H1 (cell line): ENCODE measurements at regions of chr12 and their contacts with region 1.

Region 1: GRCh38 chr12:62123721-62124203 is 136.4 kb upstream of the USP15 start:
- DNase-seq: peak in 1 of 2 experiments; percentile 56
- H3K4me3 ChIP-seq: no peak overlapping the region
- H3K27ac ChIP-seq: no peak overlapping the region
- H3K4me1 ChIP-seq: no peaks in the 10 kb centered on the region
- H3K27me3 ChIP-seq: no peaks in the 10 kb centered on the region
- CTCF ChIP-seq: peak in 2 of 3 experiments; percentile 72 to 80; a peak in 3 of 4 replicates
- EP300 ChIP-seq: no peak
- POLR2A ChIP-seq: no peak
- RAD21 ChIP-seq: peak; percentile 88 to 90

Region 2: GRCh38 chr12:62078020-62078419 is 45.7 kb before region 1 on chr12:
- CTCF ChIA-PET with region 1: interaction called, 16 read pairs
- POLR2A ChIA-PET with region 1: no interaction called
- DNase-seq: no peak
- H3K4me3 ChIP-seq: no peak overlapping the region
- H3K27ac ChIP-seq: no peak overlapping the region; the same call in 1 of the 2 replicates
- H3K4me1 ChIP-seq: peaks cover 0 to 7% (median 2%) of the 10 kb centered on the region in 4 experiments; a peak in 3 of 7 replicates
- H3K27me3 ChIP-seq: no peaks in the 10 kb centered on the region
- CTCF ChIP-seq: no peak
- EP300 ChIP-seq: no peak
- POLR2A ChIP-seq: no peak
- RAD21 ChIP-seq: no peak

Region 3: GRCh38 chr12:62098132-62098531 is 25.6 kb before region 1 on chr12:
- CTCF ChIA-PET with region 1: interaction called, 10 read pairs
- POLR2A ChIA-PET with region 1: no interaction called
- DNase-seq: no peak
- H3K4me3 ChIP-seq: no peak overlapping the region
- H3K27ac ChIP-seq: no peak overlapping the region
- H3K4me1 ChIP-seq: no peaks in the 10 kb centered on the region
- H3K27me3 ChIP-seq: no peaks in the 10 kb centered on the region
- CTCF ChIP-seq: no peak
- EP300 ChIP-seq: no peak
- POLR2A ChIP-seq: no peak
- RAD21 ChIP-seq: no peak

Region 4: DNA sequence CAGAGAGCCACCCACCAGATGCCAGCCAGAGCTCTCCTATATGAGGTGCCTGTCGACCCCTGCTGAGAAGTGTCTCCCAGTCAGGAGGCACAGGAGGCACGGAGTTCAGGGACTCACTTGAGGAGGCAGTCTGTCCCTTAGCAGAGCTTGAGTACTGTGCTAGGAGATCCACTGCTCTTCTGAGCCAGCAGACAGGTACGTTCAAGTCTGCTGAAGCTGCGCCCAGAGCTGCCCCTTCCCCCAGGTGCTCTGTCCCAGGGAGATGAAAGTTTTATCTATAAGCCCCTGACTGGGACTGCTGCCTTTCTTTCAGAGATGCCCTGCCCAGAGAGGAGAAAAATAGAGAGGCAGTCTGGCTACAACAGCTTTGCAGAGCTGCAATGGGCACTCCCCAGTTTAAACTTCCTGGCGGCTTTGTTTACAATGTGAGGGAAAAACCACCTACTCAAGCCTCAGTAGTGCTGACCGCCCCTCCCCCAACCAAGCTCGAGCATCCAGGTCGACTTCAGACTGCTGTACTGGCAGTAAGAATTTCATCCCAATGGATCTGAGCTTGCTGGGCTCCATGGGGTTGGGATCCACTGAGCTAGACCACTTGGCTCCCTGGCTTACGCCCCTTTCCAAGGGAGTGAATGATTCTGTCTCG is 10.3 kb before region 1 on chr12:
- CTCF ChIA-PET with region 1: interaction called, 10 read pairs
- POLR2A ChIA-PET with region 1: no interaction called
- DNase-seq: peak in 1 of 2 experiments; percentile 60
- H3K4me3 ChIP-seq: 0 out of 8 replicates have a peak overlapping the region, but pooled peaks of 1 of the 4 experiments have one; percentile 21
- H3K27ac ChIP-seq: no peak overlapping the region
- H3K4me1 ChIP-seq: peaks cover 2 to 6% (median 3%) of the 10 kb centered on the region in 4 experiments; a peak in 5 of 7 replicates
- H3K27me3 ChIP-seq: no peaks in the 10 kb centered on the region
- CTCF ChIP-seq: no peak
- EP300 ChIP-seq: no peak
- POLR2A ChIP-seq: no peak
- RAD21 ChIP-seq: no peak

Region 5: GRCh38 chr12:62135553-62136200 is 11.9 kb after region 1 on chr12:
- CTCF ChIA-PET with region 1: interaction called, 23 read pairs
- POLR2A ChIA-PET with region 1: no interaction called
- DNase-seq: no peak
- H3K4me3 ChIP-seq: no peak overlapping the region
- H3K27ac ChIP-seq: no peak overlapping the region
- H3K4me1 ChIP-seq: no peaks in the 10 kb centered on the region
- H3K27me3 ChIP-seq: no peaks in the 10 kb centered on the region
- CTCF ChIP-seq: no peak
- EP300 ChIP-seq: no peak
- POLR2A ChIP-seq: no peak
- RAD21 ChIP-seq: no peak

Region 6: DNA sequence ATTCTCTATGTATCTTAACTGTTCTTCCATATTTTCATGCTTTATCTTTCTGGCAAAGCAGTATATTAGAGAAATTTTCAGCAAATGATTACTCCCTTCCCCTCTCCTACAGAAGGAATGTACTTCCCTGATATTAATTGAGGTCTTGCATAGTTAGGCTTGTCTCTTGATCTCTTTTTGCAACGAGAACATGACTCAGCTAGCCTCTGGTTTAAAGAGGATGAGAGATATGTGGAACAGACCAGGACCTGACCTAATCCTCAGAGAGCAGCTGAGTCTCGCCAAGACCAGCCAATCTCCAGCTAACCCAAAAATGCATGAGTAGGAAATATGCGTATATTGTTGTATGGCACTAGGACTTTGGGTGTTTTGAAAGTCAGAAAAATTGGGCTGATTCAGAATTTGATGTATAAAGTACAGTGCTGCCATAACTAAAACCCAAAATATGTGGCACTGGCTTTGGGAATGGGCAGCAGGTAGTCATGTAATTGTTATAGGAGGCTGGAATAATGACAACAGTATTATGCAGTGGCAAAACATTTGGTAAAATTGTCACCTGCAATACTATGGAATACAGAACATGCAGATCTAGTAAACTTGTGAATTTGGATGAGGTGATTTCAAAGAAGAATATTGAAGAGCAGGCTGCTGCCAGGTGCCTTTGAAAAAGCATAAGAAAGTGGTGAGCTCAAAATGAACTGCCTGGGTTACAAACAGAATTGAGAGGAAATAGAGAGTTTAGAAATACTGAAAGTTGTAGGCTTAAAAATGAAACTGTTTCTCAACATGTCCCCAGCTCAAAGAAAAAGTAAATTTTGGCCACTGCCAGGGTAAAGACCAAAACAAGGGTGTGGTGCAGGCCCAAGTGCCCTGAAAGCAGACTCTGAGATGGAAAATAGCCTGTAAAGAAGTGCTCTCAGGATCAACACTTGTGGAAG is 127.2 kb after region 1 on chr12:
- CTCF ChIA-PET with region 1: no interaction called
- POLR2A ChIA-PET with region 1: no interaction called
- DNase-seq: no peak
- H3K4me3 ChIP-seq: no peak overlapping the region
- H3K27ac ChIP-seq: no peak overlapping the region
- H3K4me1 ChIP-seq: peaks cover 0 to 4% (median 1%) of the 10 kb centered on the region in 4 experiments; a peak in 1 of 7 replicates
- H3K27me3 ChIP-seq: no peaks in the 10 kb centered on the region
- CTCF ChIP-seq: no peak
- EP300 ChIP-seq: no peak
- POLR2A ChIP-seq: no peak
- RAD21 ChIP-seq: no peak